PC-9 (cell line): ENCODE measurements at regions of chr6 and their contacts with region 1.

Region 1: GRCh38 chr6:131728296-131728939 is 17.6 kb upstream of the CTAGE9 start:
- DNase-seq: no peak
- H3K4me3 ChIP-seq: no peak overlapping the region
- H3K27ac ChIP-seq: no peak overlapping the region
- H3K4me1 ChIP-seq: no peaks in the 10 kb centered on the region
- H3K27me3 ChIP-seq: no peaks in the 10 kb centered on the region
- CTCF ChIP-seq: no peak

Region 2: DNA sequence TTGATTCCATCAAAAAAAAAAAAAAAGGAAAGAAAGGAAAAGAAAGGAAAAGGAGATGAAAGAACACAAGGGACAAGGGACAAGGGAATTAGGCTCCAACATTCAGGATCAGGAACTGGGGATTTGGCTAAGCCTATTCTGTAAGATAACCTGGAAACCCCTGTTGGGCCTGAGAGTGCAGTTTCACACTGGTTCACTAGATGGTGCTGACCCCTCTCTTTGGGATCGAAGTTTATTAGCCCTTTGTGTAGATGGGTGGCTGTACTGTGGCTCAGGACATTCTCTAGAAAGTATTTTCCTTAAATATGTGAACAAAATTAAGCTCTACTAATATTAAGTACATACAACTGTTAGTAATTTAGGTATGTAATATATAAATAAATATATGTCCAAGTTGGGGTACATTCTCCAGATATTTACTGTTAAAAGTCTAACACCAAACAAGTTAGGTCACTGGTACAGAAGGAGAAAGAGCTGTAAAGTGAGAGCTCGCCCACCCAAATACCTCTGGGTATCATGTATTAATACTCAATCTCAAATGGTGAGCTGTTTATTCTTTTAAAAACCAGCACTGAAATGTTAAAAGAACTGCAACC is 33.5 kb before region 1 on chr6:
- CTCF ChIA-PET with region 1: no interaction called
- POLR2A ChIA-PET with region 1: interaction called, 13 read pairs
- intact Hi-C with region 1: no loop called
- DNase-seq: peak; percentile 44 to 57
- H3K4me3 ChIP-seq: no peak overlapping the region
- H3K27ac ChIP-seq: no peak overlapping the region
- H3K4me1 ChIP-seq: no peaks in the 10 kb centered on the region
- H3K27me3 ChIP-seq: no peaks in the 10 kb centered on the region
- CTCF ChIP-seq: peak; percentile 90